ENCODE measurements at regions of chr6 and their contacts with region 1.

Region 1: DNA sequence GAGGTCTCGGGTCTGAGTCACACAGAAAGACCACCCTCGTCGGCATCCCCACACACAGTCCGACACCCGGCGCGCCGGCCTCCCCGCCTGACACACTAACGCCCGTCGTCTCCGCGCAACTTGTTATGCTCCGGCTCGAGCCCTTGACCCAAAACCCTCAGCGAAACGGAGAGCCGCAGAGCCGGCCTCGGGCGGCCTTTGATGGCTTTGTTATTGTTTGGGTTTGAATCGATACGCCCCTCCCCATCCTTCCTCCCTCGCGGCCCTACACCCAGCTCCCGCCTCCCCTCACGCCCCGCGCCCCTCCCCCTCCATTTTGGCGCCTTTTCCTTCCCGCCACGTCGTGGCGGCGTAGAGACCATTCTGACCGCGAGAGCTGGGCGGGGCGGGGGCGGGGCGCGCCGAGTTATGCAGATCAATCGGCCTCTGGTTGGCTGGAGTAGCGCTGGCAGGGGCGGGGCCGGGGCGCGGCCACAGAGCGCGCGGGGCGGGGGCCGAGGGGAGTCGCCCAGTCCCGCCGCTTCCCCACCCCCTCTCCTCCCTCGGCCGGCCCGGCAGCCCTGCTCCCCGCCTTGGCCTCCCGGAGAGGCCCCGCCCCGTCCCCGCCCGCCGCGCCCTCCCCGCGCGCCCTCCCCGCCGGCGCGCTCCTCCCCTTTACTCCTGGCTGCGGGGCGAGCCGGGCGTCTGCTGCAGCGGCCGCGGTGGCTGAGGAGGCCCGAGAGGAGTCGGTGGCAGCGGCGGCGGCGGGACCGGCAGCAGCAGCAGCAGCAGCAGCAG is at the start of gene PIM1:
- DNase-seq: peak; percentile 100
- ATAC-seq: peak; percentile 93 to 96
- H3K4me3 ChIP-seq: peak within 1 kb of the TSS; percentile 99
- H3K27ac ChIP-seq: peak within 1 kb of the TSS; percentile 94
- H3K4me1 ChIP-seq: peaks cover 36% of the 10 kb centered on the region
- H3K27me3 ChIP-seq: no peaks in the 10 kb centered on the region
- CTCF ChIP-seq: peak; percentile 23
- total RNA-seq, gene PIM1: 56.8 TPM

Region 2: DNA sequence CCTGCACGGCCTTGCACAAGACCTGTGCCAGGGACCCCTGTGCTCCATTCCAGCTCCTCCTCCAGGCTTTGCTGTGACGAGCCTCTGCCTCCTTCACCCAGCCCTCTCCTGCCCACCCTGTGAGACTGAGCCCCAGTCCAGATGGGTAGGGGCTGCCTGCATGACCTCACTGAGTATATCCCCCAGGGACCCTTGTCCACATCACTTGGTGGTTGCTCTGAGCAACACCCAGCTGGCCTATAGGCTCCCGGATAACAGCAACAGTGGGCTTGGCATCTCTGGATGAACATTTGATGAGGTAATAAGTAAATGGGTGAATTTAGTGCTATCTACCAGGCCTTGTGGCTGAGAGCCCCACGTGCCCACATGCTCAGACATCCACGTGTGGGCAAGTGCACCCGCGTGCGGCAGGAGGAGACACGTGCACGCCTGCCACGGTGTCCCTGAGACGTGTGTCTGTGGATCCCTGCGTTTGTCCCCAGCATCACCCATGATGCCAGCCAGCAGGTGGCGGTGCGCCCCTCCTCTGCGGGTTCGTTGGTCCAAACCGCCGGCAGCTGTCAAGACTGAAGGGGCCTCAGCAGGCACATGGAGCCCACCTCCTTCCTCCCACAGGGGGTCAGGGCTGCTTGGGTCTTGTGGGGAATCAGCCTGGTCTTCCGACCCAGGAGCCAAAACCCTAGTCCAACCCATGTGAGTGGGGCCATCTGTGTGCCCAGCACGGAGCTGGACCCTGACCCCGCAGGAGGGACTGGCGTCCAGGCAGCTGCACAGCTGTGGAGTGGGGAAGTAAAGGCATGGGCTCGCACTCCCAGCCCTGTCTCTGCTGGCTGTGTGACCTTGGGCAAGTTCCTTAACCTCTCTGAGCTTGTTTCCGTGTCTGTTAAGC is 118.3 kb before region 1 on chr6:
- intact Hi-C with region 1: loop called (anchors 10 kb)
- DNase-seq: peak; percentile 95
- ATAC-seq: peak; percentile 84 to 87
- H3K4me3 ChIP-seq: no peak overlapping the region
- H3K27ac ChIP-seq: peak overlapping the region; percentile 76
- H3K4me1 ChIP-seq: peaks cover 42% of the 10 kb centered on the region
- H3K27me3 ChIP-seq: no peaks in the 10 kb centered on the region
- CTCF ChIP-seq: peak; percentile 93

Region 3: DNA sequence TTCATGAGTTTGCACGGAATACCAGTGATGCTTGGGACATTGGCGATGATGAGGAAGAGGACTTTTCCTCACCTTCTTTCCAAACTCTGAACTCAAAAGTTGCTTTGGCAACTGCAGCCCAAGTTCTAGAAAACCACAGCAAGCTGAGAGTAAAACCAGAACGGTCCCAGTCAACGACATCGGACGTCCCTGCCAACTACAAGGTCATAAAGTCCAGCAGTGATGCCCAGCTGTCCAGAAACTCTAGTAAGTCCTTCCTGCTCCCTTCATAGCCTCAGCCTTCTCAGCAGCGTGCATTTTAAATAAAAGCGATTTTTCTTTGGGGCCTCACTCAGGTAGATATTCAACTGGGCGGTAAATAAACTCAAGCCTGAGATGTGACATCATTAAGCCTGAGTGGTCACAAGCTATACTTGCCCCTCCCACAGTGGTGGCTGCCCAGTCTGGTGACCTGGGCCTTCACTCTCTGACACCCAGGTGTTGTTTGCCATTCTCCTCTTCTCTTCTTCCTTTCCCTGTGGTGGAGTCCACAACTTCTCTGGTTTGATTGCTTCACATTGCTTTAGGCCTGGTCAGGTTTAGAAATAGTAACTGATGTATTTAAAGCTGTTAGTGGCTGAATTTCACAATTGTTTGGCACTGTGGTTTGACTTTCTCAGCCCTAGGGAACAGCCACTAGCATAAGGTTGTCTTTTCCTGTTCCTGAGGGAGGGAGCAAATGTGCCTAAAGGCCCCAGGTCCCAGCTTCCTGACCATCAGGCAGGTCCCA is 109.9 kb after region 1 on chr6:
- intact Hi-C with region 1: no loop called
- DNase-seq: no peak
- ATAC-seq: peak; percentile 60 to 62
- H3K4me3 ChIP-seq: no peak overlapping the region
- H3K27ac ChIP-seq: no peak overlapping the region
- H3K4me1 ChIP-seq: peaks cover 8% of the 10 kb centered on the region
- H3K27me3 ChIP-seq: no peaks in the 10 kb centered on the region
- CTCF ChIP-seq: no peak

Region 4: DNA sequence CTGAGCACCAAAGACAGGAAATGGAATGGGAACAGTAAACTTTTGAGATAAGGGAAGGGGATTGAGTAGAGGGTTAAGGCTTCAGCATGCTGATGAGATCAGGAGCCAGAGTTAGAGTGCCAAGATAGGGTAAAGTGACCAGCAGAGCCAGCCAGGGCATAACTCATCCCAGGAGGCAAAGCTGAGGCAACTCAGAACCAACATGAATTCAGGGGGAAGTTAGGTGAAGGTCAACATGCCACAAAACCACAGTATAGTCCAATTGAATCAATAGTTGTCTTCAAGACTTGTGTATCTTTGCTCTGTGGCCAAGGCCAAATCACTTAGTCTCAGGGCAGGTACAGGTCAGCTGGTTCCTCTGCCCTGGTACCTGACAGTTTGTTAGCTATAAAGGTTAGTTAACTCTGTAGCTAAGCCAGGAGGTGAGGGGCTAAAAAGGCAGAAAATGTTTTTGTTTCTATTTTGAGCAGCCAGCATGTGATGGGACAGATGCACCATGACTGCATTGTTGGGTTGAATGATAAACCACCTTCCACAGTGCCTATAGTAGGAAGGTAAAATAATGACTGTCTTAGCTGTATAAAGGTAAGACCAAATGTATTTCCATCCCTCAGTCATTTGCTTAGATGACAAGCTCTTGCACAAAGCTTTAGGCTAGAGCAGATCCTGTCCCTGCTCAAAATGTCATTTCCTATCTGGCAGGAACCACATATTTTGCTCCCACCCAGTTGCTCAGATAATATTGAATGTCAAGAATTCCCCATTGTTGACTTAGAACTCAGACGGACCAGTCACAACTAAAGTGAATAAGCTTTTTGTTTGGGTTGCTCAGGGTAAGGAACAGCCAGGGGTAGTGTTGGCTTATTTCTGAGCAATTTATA is 199.9 kb after region 1 on chr6:
- intact Hi-C with region 1: no loop called
- DNase-seq: no peak
- ATAC-seq: peak; percentile 35 to 61
- H3K4me3 ChIP-seq: no peak overlapping the region
- H3K27ac ChIP-seq: peak overlapping the region; percentile 28
- H3K4me1 ChIP-seq: peaks cover 32% of the 10 kb centered on the region
- H3K27me3 ChIP-seq: no peaks in the 10 kb centered on the region
- CTCF ChIP-seq: no peak

Measured in lower lobe of right lung (tissue), 2 donors.